ENCODE measurements at regions of chr2 and their contacts with region 1.

Region 1: DNA sequence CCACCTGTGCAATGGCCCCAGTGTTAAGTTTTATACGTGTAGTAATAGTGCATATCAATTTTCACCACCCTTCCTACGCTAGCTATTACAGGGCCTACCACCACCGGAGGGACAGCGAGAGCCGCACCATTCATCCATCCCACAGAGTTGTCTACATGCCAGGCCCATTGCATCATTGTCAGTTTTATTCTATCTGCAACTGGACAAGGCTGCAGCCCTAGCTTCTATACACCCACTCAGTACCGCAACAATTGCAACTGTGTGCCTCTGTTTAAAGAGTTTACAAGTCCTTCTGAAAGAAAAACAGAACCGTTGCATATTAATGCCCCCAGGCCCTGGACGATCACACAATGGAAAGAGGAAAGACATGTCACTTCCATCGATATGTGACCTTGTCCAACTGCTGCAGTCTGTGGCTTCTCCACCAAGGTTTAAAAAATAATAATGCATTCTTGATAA is 58.6 kb downstream of the ZEB2 start:
- DNase-seq: no peak
- ATAC-seq: no peak
- H3K4me3 ChIP-seq: no peak overlapping the region
- H3K4me3 Mint-ChIP-seq: no peak overlapping the region
- H3K27ac ChIP-seq: peak overlapping the region; percentile 56 to 98
- H3K27ac Mint-ChIP-seq: no peak overlapping the region
- H3K4me1 ChIP-seq: no peaks in the 10 kb centered on the region
- H3K4me1 Mint-ChIP-seq: peaks cover 12% of the 10 kb centered on the region
- H3K27me3 ChIP-seq: no peaks in the 10 kb centered on the region
- H3K27me3 Mint-ChIP-seq: no peaks in the 10 kb centered on the region
- CTCF ChIP-seq: no peak

Region 2: DNA sequence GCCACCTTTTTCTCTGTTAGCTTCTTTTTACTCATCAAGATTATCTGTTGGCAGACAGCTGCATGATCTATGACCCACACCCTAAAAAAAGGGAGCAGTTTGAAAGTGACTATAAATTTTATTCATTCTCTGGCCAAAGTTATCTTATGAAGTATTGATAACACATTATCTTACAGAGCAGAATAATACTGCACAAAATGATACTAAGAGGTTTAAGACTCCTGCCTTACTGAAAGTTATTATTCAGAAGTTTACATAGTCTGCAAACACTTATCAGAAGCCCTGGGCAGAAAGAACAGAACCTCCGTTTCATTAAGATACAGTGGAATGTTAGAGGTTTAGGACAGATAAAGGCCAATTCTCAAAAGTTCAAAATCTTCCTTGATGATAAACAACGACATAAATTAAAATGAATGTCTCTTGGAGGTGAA is 19.6 kb before region 1 on chr2:
- CTCF ChIA-PET with region 1: no interaction called
- POLR2A ChIA-PET with region 1: no interaction called
- intact Hi-C with region 1: loop called in 1 of 2 experiments (anchors 2 kb)
- DNase-seq: no peak
- ATAC-seq: no peak
- H3K4me3 ChIP-seq: no peak overlapping the region
- H3K4me3 Mint-ChIP-seq: no peak overlapping the region
- H3K27ac ChIP-seq: no peak overlapping the region
- H3K27ac Mint-ChIP-seq: no peak overlapping the region
- H3K4me1 ChIP-seq: no peaks in the 10 kb centered on the region
- H3K4me1 Mint-ChIP-seq: peaks cover 3% of the 10 kb centered on the region
- H3K27me3 ChIP-seq: no peaks in the 10 kb centered on the region
- H3K27me3 Mint-ChIP-seq: no peaks in the 10 kb centered on the region
- CTCF ChIP-seq: no peak

Region 3: GRCh38 chr2:144516981-144517865 is 55.9 kb after region 1 on chr2:
- CTCF ChIA-PET with region 1: no interaction called
- POLR2A ChIA-PET with region 1: no interaction called
- intact Hi-C with region 1: loop called (anchors 5 kb)
- DNase-seq: peak in 7 of 9 experiments; percentile 31 to 88 (median 66)
- ATAC-seq: peak; percentile 67
- H3K4me3 ChIP-seq: peak overlapping the region; percentile 66 to 69
- H3K4me3 Mint-ChIP-seq: no peak overlapping the region
- H3K27ac ChIP-seq: peak overlapping the region; percentile 65 to 92
- H3K27ac Mint-ChIP-seq: peak overlapping the region; percentile 94
- H3K4me1 ChIP-seq: peaks cover 13% of the 10 kb centered on the region
- H3K4me1 Mint-ChIP-seq: peaks cover 21% of the 10 kb centered on the region
- H3K27me3 ChIP-seq: peaks cover 0 to 30% of the 10 kb centered on the region in 2 experiments
- H3K27me3 Mint-ChIP-seq: peaks cover 39% of the 10 kb centered on the region
- CTCF ChIP-seq: no peak

Measured in CD8-positive, alpha-beta T cell (primary cell).